MCF 10A (cell line): ENCODE measurements at regions of chr6 and their contacts with region 1.

Region 1: DNA sequence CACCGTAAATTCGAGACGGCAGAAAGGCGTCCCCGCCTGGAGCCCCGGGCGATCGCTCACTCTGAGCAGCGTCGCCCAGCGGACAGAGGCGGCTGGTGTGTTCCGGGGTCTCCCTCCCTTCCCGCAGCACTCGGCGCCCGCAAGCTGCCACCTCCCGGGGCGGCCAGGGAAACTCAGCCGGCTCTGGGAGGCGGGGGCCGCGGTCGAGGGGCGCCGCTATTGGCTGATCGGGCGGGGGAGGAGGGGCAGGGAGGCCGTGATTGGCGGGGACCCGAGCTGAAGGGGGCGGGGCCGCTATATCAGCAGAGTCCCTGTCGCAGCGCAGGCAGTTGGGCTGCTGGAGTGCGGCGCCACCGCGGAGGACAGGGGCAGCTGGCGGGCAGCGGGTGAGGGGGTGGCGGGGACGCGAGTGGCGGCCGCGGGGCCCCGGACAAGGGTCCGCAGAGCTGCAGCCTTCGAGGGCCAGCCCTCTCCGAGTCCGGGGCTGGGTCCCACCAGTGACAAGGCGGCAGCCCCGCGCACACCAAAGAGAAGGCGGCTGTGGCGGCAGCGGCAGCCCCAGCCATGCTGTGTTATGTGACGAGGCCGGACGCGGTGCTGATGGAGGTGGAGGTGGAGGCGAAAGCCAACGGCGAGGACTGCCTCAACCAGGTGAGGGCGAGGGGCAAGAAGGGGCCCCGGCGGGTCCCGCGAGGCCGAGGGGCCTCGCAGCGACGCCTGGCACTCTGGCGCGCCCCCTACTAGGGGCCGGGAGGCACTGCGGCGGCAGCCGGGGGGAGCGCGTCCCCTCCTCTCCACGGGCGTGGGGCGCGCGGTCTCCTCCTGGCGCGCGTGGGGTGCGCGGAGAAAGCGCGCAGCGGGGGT is at the start of gene MYLIP:
- DNase-seq: peak; percentile 90
- H3K4me3 Mint-ChIP-seq: peak within 1 kb of the TSS; percentile 87
- H3K27ac Mint-ChIP-seq: peak within 1 kb of the TSS; percentile 16
- H3K4me1 Mint-ChIP-seq: peaks cover 15% of the 10 kb centered on the region
- H3K27me3 Mint-ChIP-seq: peaks cover 5% of the 10 kb centered on the region
- CTCF ChIP-seq: peak; percentile 30
- total RNA-seq, gene MYLIP: 2.1 TPM in 2 replicates

Region 2: DNA sequence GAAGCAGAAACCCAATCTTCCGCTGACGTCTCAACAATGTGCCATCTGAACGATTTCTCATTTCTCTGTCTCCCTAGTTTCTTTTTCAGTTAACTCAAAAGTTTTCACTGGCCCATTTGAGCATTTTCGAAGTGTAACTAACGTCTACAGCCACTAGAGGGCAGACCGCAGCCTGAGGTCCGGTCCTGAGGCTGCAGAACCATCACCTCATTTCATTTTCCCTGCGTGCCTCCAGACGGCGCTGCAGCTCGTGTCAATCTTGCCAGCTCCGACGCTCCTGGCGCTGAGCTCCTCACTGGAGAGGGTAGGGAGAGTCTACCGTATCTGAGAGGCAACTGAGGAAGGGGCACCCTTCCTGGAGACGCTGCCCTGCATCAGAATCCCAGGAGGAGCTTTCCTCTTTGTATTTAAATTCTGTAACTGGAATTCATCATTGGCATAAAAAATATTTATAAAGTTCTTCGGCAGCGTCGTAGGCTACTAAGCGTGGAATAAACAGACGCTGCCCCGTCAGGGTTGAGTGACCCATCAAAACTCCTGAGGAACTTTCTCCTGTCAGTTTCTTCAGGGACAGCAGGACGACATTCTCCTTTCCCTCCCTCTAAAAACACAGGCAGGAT is 437.6 kb before region 1 on chr6:
- CTCF ChIA-PET with region 1: interaction called, 18 read pairs
- POLR2A ChIA-PET with region 1: interaction called, 11 read pairs
- intact Hi-C with region 1: loop called (anchors 1 kb)
- DNase-seq: peak; percentile 86
- H3K4me3 Mint-ChIP-seq: peak overlapping the region; percentile 63
- H3K27ac Mint-ChIP-seq: no peak overlapping the region
- H3K4me1 Mint-ChIP-seq: no peaks in the 10 kb centered on the region
- H3K27me3 Mint-ChIP-seq: no peaks in the 10 kb centered on the region
- CTCF ChIP-seq: peak; percentile 98

Region 3: DNA sequence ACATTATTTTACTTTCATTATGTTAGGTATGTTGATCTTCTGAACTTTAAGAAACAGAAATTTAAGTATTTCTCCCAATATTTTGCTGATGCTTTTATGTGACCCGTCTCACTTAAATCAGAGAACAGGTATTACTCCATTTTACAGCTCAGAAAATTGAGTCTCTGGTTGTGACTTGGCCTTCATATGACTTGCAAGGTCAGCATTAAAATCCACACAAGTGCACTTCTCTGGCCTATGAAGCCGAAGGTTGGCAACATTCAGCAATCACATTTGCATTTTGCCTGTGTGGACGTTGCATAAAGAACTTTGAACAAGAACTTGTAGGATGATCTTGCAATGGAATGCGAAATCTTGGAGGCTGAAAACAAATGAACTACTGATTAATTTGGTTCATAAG is 10.2 kb before region 1 on chr6:
- CTCF ChIA-PET with region 1: interaction called, 10 read pairs
- POLR2A ChIA-PET with region 1: interaction called, 5 read pairs
- intact Hi-C with region 1: no loop called
- DNase-seq: no peak
- H3K4me3 Mint-ChIP-seq: no peak overlapping the region
- H3K27ac Mint-ChIP-seq: no peak overlapping the region
- H3K4me1 Mint-ChIP-seq: no peaks in the 10 kb centered on the region
- H3K27me3 Mint-ChIP-seq: peaks cover 33% of the 10 kb centered on the region
- CTCF ChIP-seq: no peak

Region 4: GRCh38 chr6:16146527-16146955 is 17.6 kb after region 1 on chr6:
- CTCF ChIA-PET with region 1: interaction called, 4 read pairs
- POLR2A ChIA-PET with region 1: interaction called, 10 read pairs
- intact Hi-C with region 1: no loop called
- DNase-seq: no peak
- H3K4me3 Mint-ChIP-seq: no peak overlapping the region
- H3K27ac Mint-ChIP-seq: no peak overlapping the region
- H3K4me1 Mint-ChIP-seq: peaks cover 5% of the 10 kb centered on the region
- H3K27me3 Mint-ChIP-seq: no peaks in the 10 kb centered on the region
- CTCF ChIP-seq: no peak

Region 5: GRCh38 chr6:16163535-16164300 is 34.7 kb after region 1 on chr6:
- CTCF ChIA-PET with region 1: interaction called, 3 read pairs
- POLR2A ChIA-PET with region 1: interaction called, 12 read pairs
- intact Hi-C with region 1: no loop called
- DNase-seq: peak; percentile 20
- H3K4me3 Mint-ChIP-seq: no peak overlapping the region
- H3K27ac Mint-ChIP-seq: no peak overlapping the region
- H3K4me1 Mint-ChIP-seq: peaks cover 10% of the 10 kb centered on the region
- H3K27me3 Mint-ChIP-seq: peaks cover 36% of the 10 kb centered on the region
- CTCF ChIP-seq: no peak

Region 6: DNA sequence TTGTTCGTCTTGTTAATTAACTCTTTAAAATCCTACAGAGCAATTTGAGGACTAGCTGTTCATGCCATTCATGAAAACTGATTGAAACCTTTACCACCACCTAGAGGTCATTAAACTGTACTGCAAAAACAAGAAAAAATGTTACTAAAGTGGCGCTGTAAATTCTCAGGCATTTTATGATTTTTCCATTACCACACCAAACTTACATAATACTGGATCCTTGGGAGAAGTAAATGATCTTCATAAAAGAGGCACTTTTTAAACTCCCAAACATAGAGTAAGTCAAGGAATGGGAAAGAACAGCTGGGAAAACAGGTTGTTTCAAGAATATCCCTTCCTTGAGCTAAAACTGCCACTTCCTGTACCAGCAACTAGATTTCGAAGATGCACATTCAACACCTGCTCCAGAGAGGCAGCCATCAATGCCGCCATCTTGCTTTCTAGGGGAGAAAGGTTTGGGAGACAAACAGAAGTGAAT is 54.2 kb after region 1 on chr6:
- CTCF ChIA-PET with region 1: interaction called, 8 read pairs
- POLR2A ChIA-PET with region 1: interaction called, 12 read pairs
- intact Hi-C with region 1: loop called (anchors 2 kb)
- DNase-seq: peak; percentile 46
- H3K4me3 Mint-ChIP-seq: no peak overlapping the region
- H3K27ac Mint-ChIP-seq: no peak overlapping the region
- H3K4me1 Mint-ChIP-seq: no peaks in the 10 kb centered on the region
- H3K27me3 Mint-ChIP-seq: no peaks in the 10 kb centered on the region
- CTCF ChIP-seq: peak; percentile 50

Region 7: DNA sequence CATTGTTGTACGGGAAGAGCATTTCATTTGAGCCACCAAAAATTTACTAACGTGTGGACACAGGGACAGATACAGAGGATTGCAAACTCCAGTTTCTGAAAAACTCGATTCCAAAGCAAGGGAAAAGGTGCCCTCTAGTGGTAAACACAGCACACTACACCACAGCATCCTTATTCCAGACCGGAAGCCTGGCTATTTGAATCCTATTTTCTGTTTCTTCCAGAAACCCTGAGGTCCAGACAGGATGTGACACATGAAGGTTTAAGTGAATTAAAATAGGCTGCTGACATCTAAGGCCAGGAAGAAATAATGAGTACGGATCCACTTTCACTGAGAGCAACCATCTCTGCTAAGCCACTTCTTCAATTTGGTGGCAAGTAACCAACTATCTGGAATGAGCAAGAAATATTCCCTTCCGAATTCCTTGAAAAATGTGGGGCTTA is 77.6 kb after region 1 on chr6:
- CTCF ChIA-PET with region 1: interaction called, 14 read pairs
- POLR2A ChIA-PET with region 1: interaction called, 7 read pairs
- intact Hi-C with region 1: no loop called
- DNase-seq: peak; percentile 60
- H3K4me3 Mint-ChIP-seq: no peak overlapping the region
- H3K27ac Mint-ChIP-seq: no peak overlapping the region
- H3K4me1 Mint-ChIP-seq: peaks cover 4% of the 10 kb centered on the region
- H3K27me3 Mint-ChIP-seq: peaks cover 13% of the 10 kb centered on the region
- CTCF ChIP-seq: peak; percentile 76